ENCODE measurements at regions of chr4 and their contacts with region 1.

Region 1: DNA sequence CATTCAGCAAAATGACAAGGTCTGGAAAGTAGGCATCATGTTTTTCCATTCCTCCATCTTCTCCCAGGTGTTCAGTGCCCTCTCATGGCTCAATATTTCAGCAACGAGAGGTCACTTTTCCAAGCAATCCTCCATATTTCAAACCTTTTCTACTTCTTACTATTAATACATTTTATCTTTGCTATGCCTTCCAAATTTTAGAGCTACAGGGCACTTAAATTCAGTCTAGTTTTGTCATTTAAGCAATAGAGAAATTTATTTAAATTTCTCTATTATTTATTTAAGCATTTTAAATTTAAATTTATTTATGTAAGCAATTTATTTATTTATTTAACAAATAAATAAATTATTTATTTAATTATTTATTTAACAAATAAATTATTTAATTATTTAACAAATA is 305.1 kb upstream of the ANXA10 start:
- DNase-seq: no peak
- H3K4me3 Mint-ChIP-seq: no peak overlapping the region
- H3K27ac Mint-ChIP-seq: no peak overlapping the region
- H3K4me1 Mint-ChIP-seq: no peaks in the 10 kb centered on the region
- H3K27me3 Mint-ChIP-seq: no peaks in the 10 kb centered on the region

Region 2: GRCh38 chr4:167109859-167110258 is 677.4 kb before region 1 on chr4:
- intact Hi-C with region 1: loop called (anchors 2 kb)
- DNase-seq: no peak
- H3K4me3 Mint-ChIP-seq: no peak overlapping the region
- H3K27ac Mint-ChIP-seq: no peak overlapping the region
- H3K4me1 Mint-ChIP-seq: no peaks in the 10 kb centered on the region
- H3K27me3 Mint-ChIP-seq: no peaks in the 10 kb centered on the region